ENCODE measurements at regions of chr3 and their contacts with region 1.

Region 1: DNA sequence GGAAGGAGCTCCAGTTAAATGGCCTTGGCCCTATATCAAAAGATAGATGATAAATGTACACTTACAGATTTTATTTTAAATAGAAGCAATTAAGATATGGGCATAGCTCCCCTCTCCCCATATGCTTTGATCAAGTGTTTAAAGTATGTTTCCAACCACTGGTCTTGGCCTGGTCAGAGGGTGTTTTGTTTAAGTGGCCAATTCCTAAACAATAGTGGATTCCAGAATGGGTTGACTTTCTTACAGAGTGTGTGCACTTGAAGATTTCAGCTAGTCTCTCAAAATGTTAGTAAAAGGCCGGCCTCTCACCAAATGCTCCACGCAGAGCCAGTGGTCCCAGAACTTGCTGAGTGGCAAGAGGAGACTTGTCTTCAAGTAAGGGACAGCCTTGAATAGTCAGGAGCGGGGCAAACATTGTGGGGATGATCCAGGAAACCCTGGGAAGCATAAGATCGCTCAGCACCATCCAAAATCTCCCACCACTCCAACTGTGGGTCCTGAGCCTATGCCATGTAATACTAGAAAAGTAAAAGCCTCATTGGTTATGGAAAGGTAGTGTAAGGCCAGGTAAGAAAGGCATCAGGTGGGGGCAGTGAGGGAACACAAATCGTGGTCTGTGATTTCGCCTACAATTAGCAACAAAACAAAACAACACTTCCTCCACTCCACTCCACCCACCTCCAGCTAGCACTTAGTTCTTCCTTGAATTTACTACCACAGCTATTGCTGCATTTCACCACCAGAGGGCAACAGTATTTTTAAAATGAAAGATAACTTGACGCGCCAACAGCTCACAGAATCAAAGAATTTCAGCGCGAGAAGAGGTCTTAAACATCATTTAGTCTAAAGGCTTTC is 4.8 kb downstream of the RARRES1 start:
- DNase-seq: no peak
- H3K4me3 ChIP-seq: no peak overlapping the region
- H3K27me3 ChIP-seq: no peaks in the 10 kb centered on the region
- CTCF ChIP-seq: peak; percentile 78

Region 2: DNA sequence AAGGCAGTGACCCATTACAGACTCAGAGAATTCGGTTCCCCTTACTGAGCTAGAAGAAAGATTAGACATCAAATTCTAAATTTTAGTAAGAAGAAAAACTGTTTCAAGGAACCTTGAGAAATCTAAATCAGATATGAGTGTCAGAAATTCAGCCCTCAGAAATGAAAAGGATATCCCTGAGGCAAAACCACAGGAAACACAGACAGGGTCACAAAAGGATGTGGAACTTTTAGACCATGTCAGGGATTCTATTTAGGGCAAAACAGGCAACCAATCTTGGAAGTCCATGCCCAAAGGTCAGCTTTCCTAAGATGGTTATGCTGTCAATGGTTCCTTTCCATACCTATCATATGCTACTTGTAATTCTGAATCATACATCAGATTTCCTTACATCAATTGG is 652.8 kb before region 1 on chr3:
- CTCF ChIA-PET with region 1: no interaction called
- POLR2A ChIA-PET with region 1: no interaction called
- DNase-seq: no peak
- H3K4me3 ChIP-seq: no peak overlapping the region
- H3K27me3 ChIP-seq: no peaks in the 10 kb centered on the region
- CTCF ChIP-seq: no peak

Region 3: GRCh38 chr3:158644345-158644908 is 83.0 kb before region 1 on chr3 and contains the start of gene GFM1:
- CTCF ChIA-PET with region 1: interaction called, 11 read pairs
- POLR2A ChIA-PET with region 1: no interaction called
- DNase-seq: peak; percentile 80
- H3K4me3 ChIP-seq: peak within 1 kb of the TSS; percentile 99
- H3K27me3 ChIP-seq: no peaks in the 10 kb centered on the region
- CTCF ChIP-seq: peak; percentile 94
- polyA plus RNA-seq, gene GFM1: 13.9 and 25.6 TPM in 2 replicates

Region 4: GRCh38 chr3:158672293-158673176 is 54.9 kb before region 1 on chr3 and contains the start of gene LXN:
- CTCF ChIA-PET with region 1: interaction called, 13 read pairs
- POLR2A ChIA-PET with region 1: no interaction called
- DNase-seq: peak; percentile 39
- H3K4me3 ChIP-seq: peak within 1 kb of the TSS; percentile 70
- H3K27me3 ChIP-seq: no peaks in the 10 kb centered on the region
- CTCF ChIP-seq: peak; percentile 93
- polyA plus RNA-seq, gene LXN: 56.2 and 66.8 TPM in 2 replicates

Region 5: GRCh38 chr3:158702815-158703481 is 24.5 kb before region 1 on chr3:
- CTCF ChIA-PET with region 1: interaction called, 13 read pairs
- POLR2A ChIA-PET with region 1: no interaction called
- DNase-seq: peak; percentile 63
- H3K4me3 ChIP-seq: no peak overlapping the region
- H3K27me3 ChIP-seq: no peaks in the 10 kb centered on the region
- CTCF ChIP-seq: no peak

Region 6: DNA sequence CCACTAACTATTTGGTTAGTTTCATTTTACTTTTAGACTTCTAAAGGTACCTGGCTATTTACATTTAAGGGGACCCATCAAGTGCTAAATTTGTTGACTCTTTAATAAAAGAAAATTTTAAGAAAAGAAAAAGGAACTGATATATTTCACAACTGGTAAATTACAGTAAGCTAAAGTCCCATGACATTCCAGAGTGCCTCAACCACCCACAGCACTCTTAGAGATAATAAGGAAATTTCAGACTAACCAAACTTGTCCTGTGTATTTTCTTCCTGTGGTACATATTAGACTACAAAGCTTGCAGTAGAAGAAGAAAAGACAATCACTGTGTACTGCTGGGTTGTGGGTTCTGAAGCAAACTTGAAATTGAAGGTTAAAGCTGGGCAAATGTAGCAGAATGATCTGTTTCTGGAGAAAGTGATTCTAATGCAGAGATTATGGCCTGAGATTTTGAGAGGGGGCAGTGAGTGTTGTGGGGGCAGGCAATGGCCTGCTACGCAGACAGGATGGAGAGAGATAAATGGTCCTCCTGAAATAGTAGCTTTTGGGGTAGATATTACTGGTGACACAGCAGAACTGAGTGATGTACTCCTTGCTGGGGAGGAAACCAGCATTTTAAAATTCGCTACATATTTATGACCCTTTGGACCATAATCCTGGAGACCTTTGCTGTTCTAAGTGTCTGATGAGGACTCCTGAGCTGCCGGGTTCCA is 49.9 kb after region 1 on chr3:
- CTCF ChIA-PET with region 1: interaction called, 26 read pairs
- POLR2A ChIA-PET with region 1: no interaction called
- DNase-seq: no peak
- H3K4me3 ChIP-seq: no peak overlapping the region
- H3K27me3 ChIP-seq: no peaks in the 10 kb centered on the region
- CTCF ChIP-seq: no peak

Measured in BJ (cell line).